AG04450 (cell line): ENCODE measurements at regions of chr6 and their contacts with region 1.

Region 1: GRCh38 chr6:130047088-130047995 is 29.0 kb downstream of the L3MBTL3 start:
- DNase-seq: no peak
- H3K4me3 ChIP-seq: no peak overlapping the region
- H3K27ac ChIP-seq: no peak overlapping the region
- H3K27me3 ChIP-seq: no peaks in the 10 kb centered on the region
- CTCF ChIP-seq: peak; percentile 26; the same call in 1 of the 2 replicates

Region 2: DNA sequence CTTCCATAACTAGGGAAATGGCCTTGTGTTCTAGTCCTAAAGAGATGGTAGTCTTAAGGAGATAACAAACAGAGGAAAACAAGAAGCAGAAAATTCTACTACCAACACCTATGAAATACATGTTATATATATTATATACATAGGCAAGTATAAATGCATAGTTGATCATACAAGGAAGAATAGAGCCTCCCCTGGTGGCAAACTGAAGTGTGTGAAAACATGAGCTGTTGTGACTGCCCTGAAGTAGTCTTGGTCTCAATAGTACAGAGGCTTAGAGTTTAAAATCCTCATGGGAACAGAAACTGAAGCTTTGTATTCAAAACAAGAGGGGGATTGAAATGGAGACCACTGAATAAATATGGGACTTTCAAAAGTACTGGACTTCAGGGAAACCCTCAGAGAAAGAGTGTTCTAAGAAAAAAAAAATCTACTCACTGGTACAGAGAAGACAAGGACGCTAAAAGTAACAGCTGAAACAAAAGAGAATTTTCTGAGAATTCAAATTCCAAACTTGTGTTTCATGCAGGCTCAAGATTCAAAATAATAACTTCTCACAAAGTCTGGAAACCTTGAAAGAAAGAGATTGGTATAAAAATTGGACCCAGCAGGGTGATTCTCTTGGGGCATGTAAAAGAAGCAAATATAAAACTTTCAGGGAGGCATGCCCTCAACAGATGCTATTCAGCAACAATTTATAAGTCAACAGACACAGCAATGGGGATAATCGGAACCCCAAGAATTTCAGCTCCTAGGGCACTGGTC is 235.1 kb after region 1 on chr6:
- CTCF ChIA-PET with region 1: interaction called, 12 read pairs
- POLR2A ChIA-PET with region 1: no interaction called
- DNase-seq: peak; percentile 11
- H3K4me3 ChIP-seq: no peak overlapping the region
- H3K27ac ChIP-seq: no peak overlapping the region
- H3K27me3 ChIP-seq: no peaks in the 10 kb centered on the region
- CTCF ChIP-seq: peak; percentile 72